H1 (cell line): ENCODE measurements at regions of chr5 and their contacts with region 1.

Region 1: DNA sequence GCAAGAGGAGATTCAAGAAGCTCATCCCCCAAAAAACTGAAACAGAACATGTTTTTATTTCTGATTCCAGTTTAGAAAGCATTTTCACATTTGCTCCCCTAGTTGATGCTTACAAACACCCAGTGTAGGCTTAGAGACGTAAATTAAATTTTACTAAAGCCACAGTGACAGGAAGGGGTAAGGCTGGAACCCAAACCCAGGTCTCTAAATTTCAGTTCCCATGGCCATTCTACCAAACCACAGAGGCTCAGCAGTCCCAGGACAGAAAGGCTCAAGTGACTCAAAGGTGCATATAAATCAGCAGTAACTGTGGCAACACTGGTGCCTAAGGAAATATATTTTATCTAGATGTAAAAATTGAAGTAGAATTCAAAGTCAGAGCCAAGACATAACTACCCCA is 128.7 kb downstream of the CEP120 start:
- DNase-seq: no peak
- H3K4me3 ChIP-seq: no peak overlapping the region
- H3K27ac ChIP-seq: no peak overlapping the region
- H3K4me1 ChIP-seq: peaks cover 0 to 3% (median 0%) of the 10 kb centered on the region in 4 experiments; a peak in 2 of 7 replicates
- H3K27me3 ChIP-seq: no peaks in the 10 kb centered on the region
- CTCF ChIP-seq: no peak
- EP300 ChIP-seq: no peak
- POLR2A ChIP-seq: no peak
- RAD21 ChIP-seq: no peak

Region 2: DNA sequence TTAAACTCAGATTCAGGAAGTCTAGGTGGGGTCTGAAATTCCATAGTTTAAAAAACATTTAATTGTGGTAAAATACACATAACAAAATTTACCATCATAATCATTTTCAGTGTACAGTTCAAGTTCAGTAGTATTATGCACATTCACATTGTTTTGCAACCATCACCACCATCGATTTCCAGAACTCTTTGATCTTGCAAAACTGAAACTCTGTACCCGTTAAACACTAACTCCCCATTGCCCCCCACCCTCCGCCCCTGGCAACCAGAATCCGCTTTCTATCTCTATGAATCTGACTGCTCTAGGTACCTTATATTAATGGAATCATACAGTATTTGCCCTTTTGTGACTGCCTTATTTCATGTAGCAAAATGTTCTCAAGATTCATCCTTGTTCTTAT is 11.2 kb after region 1 on chr5:
- CTCF ChIA-PET with region 1: interaction called, 16 read pairs
- POLR2A ChIA-PET with region 1: no interaction called
- DNase-seq: no peak
- H3K4me3 ChIP-seq: no peak overlapping the region
- H3K27ac ChIP-seq: no peak overlapping the region
- H3K4me1 ChIP-seq: no peaks in the 10 kb centered on the region
- H3K27me3 ChIP-seq: no peaks in the 10 kb centered on the region
- CTCF ChIP-seq: no peak
- EP300 ChIP-seq: no peak
- POLR2A ChIP-seq: no peak
- RAD21 ChIP-seq: no peak